Esophagus muscularis mucosa (tissue), 4 donors: ENCODE measurements at regions of chr5 and their contacts with region 1.

Region 1: DNA sequence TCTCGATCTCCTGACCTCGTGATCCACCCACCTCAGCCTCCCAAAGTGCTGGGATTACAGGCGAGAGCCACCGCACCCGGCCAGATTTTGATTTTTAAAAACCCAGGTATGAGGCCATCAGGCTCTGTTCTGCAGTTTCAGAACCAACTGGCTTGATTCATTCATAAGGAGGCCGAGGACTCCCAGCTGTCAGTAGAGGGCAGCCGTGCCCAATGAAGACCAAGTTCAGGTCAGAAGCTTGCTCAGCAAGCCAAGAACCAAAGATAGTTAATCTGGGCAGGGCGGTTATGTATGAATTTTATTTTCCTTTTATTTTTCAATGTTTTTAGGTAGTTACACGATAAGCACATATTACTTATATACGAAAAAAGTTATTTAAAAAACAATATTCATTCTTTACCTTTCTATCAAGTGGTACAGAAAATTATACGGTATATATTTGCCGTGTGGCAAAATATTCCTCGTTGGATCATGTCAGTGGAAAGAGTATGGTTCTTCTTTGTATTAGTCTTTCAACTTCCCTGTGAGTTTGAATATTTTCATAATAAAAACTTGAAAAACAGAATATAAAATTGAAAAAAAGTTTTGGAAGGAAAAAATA is 18.0 kb downstream of the MGAT1 start:
- DNase-seq: peak; percentile 92
- H3K4me3 ChIP-seq: no peak overlapping the region
- H3K27ac ChIP-seq: peak overlapping the region; percentile 84 to 88 (median 86)
- H3K4me1 ChIP-seq: peaks cover 41 to 53% (median 44%) of the 10 kb centered on the region in 4 donors
- H3K27me3 ChIP-seq: no peaks in the 10 kb centered on the region
- CTCF ChIP-seq: peak; percentile 73 to 86 (median 75)
- EP300 ChIP-seq: no peak
- POLR2A ChIP-seq: no peak

Region 2: DNA sequence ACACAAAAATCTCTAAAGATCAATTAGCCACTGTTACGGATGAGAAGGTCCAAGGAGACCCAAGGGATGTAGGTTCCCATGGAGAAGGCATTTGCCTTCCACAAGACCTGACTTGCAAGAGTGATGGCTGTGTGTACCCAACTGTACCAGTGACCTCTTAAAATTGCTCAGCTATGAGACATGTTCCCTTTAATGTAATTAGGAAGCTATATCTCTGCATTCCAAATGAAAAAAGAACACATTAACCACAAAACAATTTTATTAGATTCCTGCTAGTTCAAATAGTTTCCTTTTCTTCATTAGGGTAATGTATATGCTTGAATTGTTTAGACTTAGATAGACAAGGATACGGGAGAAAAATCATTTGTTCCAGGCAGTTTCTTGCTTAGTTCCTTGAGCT is 48.1 kb before region 1 on chr5:
- intact Hi-C with region 1: no loop called
- DNase-seq: no peak
- H3K4me3 ChIP-seq: no peak overlapping the region
- H3K27ac ChIP-seq: no peak overlapping the region
- H3K4me1 ChIP-seq: no peaks in the 10 kb centered on the region
- H3K27me3 ChIP-seq: peaks cover 0 to 16% (median 2%) of the 10 kb centered on the region in 4 donors
- CTCF ChIP-seq: no peak
- EP300 ChIP-seq: no peak
- POLR2A ChIP-seq: no peak

Region 3: GRCh38 chr5:180801596-180802324 is 17.2 kb after region 1 on chr5:
- intact Hi-C with region 1: loop called (anchors 1 kb)
- DNase-seq: no peak
- H3K4me3 ChIP-seq: peak overlapping the region; percentile 86 to 99 (median 94)
- H3K27ac ChIP-seq: peak overlapping the region; percentile 97 to 100 (median 98)
- H3K4me1 ChIP-seq: peaks cover 85 to 92% (median 91%) of the 10 kb centered on the region in 4 donors
- H3K27me3 ChIP-seq: no peaks in the 10 kb centered on the region
- CTCF ChIP-seq: no peak
- EP300 ChIP-seq: no peak
- POLR2A ChIP-seq: no peak

Region 4: GRCh38 chr5:180831139-180832048 is 46.8 kb after region 1 on chr5:
- intact Hi-C with region 1: loop called (anchors 5 kb)
- DNase-seq: peak; percentile 95
- H3K4me3 ChIP-seq: peak overlapping the region; percentile 88 to 99 (median 94)
- H3K27ac ChIP-seq: peak overlapping the region; percentile 95 to 100 (median 98)
- H3K4me1 ChIP-seq: peaks cover 30 to 38% (median 34%) of the 10 kb centered on the region in 4 donors
- H3K27me3 ChIP-seq: no peaks in the 10 kb centered on the region
- CTCF ChIP-seq: peak in 1 of 3 experiments; percentile 10
- EP300 ChIP-seq: no peak
- POLR2A ChIP-seq: peak; percentile 89

Region 5: GRCh38 chr5:180860887-180861822 is 76.6 kb after region 1 on chr5 and contains the start of gene ZFP62:
- intact Hi-C with region 1: loop called (anchors 2 kb)
- DNase-seq: peak; percentile 94
- H3K4me3 ChIP-seq: peak within 1 kb of the TSS; percentile 72 to 98 (median 82)
- H3K27ac ChIP-seq: peak within 1 kb of the TSS; percentile 85 to 91 (median 88)
- H3K4me1 ChIP-seq: peaks cover 10 to 19% (median 14%) of the 10 kb centered on the region in 4 donors
- H3K27me3 ChIP-seq: no peaks in the 10 kb centered on the region
- CTCF ChIP-seq: peak in 2 of 3 experiments; percentile 6 to 11
- EP300 ChIP-seq: no peak
- POLR2A ChIP-seq: peak; percentile 28
- total RNA-seq, gene ZFP62: 17.7 to 22.8 (median 20.5) TPM

Region 6: DNA sequence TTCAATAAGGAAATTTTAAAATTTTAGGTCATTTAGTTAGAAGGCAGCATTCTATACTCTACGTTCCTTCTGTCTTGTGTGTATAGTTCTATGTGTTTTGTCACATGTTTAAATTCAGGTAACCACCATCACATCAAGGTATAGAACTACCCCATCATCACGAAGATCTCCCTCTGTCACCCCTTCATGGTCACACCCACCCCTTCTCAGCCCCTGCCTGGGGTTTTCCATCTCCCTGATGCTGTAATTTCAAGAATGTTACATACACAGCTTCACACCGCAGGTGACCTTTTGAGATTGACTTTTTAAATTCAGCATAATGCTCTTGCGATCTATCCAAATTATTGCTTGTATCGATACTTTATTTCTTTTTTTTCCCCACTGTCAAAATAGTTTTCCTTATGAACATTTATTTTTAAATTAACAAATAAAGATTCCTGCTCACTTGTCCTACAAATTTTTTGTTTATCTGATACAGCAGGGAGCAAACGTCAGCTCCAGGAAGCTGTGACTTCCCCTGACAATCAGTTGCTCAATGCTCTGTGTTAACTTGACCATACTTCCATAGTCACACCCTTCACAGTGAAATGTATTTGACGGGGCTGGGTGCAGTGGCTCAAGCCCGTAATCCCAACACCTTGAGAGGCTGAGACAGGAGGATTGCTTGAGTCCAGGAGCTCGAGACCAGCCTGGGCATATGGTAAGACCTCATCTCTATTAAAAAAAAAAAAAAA is 124.6 kb after region 1 on chr5:
- intact Hi-C with region 1: no loop called
- DNase-seq: no peak
- H3K4me3 ChIP-seq: no peak overlapping the region
- H3K27ac ChIP-seq: no peak overlapping the region
- H3K4me1 ChIP-seq: peaks cover 0 to 7% (median 0%) of the 10 kb centered on the region in 4 donors
- H3K27me3 ChIP-seq: peaks cover 0 to 14% (median 0%) of the 10 kb centered on the region in 4 donors
- CTCF ChIP-seq: no peak
- EP300 ChIP-seq: no peak
- POLR2A ChIP-seq: no peak

Region 7: DNA sequence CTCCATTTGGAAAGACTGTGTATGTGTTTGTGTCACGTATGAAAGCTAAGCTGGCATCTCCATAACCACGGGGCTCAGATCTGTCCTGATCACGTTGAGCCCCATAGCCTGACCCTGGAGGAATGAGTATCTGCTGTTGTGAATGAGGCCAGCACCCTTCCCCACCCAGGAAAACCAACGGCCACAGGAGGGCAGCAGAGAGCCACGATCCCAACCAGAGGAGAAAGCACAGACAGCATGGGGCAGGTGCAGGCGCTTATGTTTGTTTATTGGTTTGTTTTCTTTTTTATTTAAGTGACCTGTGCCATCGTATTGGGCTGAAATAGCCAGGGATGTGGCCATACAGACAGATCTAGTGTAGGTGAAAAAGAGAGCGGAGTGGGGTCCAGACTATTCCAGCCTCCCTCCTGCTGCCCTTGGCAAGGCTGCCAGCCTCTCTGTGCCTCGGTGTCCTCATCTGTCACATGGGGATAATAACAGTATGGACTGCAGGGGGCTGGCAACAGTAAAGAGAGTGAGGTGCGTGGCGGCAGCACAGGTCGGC is 374.8 kb after region 1 on chr5:
- intact Hi-C with region 1: loop called (anchors 10 kb)
- DNase-seq: peak; percentile 96
- H3K4me3 ChIP-seq: no peak overlapping the region
- H3K27ac ChIP-seq: peak overlapping the region; percentile 65 to 83 (median 76)
- H3K4me1 ChIP-seq: peaks cover 7 to 21% (median 19%) of the 10 kb centered on the region in 4 donors
- H3K27me3 ChIP-seq: peaks cover 0 to 34% (median 2%) of the 10 kb centered on the region in 4 donors
- CTCF ChIP-seq: peak; percentile 82 to 88 (median 83)
- EP300 ChIP-seq: no peak
- POLR2A ChIP-seq: no peak